ENCODE measurements at regions of chr4 and their contacts with region 1.

Region 1: DNA sequence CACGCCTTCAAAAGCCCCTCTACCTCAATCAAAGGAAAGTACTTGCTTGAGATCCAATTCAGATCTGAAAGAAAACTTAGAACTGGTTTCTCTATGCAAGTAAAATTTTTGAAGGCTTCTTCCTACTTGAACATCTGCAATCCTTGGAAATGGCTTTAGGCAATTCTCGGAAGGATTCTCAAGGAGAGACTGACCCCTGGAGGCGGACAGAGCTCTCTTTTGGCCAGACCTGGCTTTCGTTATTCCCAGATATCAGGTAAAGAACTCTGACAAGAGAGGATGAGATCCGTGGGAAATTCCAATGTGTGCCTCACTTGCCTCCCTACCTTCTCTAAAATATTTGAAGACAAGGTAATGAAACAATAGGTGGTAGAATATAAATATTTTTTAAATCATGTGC is 670.3 kb upstream of the FAM241A start:
- DNase-seq: peak; percentile 30 to 63
- ATAC-seq: peak; percentile 88

Region 2: DNA sequence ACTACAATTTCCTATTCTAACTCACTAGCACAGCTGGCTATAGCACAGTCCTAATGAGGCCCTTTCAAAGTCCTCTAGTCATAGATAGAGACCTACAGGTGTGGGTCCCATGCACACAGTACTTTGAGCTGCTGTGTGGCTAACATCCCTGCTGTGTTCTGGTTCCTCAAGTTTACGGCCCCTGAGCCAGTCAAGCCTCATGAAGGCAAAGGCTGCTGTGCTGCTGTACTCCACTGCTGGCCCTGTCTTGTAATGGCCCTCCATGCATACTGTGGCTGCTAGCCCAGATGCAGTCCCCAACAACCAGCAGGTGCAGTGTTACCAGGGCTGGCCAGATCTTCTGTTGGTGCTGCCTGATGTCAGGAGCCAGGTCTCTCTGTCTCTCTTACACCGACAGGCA is 1022.5 kb before region 1 on chr4:
- intact Hi-C with region 1: no loop called
- DNase-seq: no peak
- ATAC-seq: peak; percentile 54

Region 3: DNA sequence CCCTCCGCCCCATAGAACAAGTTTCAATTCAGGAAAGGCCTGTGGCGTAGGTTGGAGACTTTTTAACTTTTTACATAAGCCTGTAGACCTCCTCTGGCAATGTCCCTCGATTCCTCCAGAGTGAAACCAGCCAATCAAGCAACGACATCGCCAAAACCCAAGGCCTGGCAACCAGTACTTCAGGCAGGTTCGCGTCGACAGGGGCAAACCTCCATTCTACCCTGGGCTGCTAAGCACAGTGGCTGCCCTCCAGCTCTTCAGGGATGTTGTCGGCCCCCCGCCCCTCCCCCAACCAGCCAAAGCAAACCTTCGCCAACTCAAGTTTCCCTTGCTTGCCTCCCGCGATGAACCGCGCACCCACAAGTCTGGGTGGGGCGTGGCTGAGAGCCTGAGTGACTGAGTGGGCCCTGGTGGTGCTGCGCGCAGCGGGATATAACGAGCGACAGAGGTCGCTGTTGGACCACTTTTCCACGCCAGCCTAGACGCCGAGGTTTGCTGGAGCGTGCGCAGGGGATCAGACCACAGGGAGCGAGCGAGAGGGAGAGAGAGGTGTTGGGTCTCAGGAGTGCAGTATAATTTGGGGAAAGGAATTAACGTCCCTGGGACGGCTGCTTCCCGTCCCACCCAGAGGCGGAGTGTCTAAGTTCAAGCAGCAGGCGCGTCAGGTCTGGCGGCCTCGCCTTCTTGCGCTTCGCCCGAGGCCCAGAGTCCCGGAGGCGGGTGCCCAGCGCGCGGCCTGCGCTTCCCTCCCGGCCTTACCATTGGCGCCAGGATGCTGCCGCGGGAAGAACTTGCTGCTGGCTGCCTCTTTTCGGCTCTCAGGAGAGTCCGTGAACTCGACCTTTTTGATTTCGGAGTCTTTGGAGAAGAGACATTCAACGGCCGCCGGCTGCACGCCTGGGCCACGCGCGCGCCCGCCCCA is 843.2 kb before region 1 on chr4:
- intact Hi-C with region 1: loop called in 1 of 2 experiments (anchors 10 kb)
- DNase-seq: peak; percentile 64 to 80
- ATAC-seq: peak; percentile 95

Region 4: DNA sequence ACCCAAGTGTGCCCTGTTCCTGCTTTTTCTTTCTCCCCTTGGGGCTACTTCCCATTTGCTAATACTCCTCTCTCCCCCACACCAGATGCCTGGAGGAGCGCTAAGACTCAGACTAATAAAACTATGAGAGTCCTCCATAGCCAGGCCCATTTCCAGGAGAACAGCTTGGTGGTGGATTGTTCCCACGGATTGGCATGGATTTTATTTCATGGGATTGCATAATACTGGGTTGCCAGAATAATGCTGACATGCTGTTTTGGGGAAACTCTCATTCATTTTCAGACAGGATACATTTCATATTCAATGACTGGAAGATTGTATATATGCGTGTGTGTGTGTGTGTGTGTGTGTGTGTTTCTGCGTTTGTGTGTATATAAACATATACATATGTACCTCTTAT is 404.6 kb before region 1 on chr4:
- intact Hi-C with region 1: no loop called
- DNase-seq: no peak
- ATAC-seq: no peak